ENCODE measurements at regions of chr3 and their contacts with region 1.

Region 1: DNA sequence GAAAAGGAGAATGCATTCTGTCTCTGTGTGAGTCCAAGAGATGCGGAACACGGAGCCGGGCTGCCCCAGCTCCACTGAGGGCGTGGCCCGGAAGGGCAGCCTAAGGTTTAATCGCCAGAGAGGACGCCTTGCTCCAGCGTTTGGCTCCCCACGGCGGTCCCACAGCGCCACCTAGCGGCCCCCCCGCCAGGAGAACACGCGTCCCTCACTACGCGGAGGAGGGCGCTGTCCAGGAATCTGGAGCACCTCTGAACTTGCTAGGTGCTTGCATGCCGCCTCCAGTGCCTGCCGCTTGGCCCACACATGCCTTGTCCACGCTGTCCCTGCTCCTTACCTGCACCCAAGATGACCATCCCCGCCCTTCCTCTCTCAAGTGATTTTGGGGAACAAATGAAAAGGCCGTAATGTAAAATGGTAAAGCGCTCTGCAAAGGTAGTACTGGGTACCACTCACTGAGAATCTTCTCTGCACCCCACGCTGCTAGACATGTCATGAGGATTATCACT is 14.4 kb upstream of the MRPS22 start:
- DNase-seq: no peak
- H3K4me3 ChIP-seq: no peak overlapping the region
- H3K27me3 ChIP-seq: peaks cover 2% of the 10 kb centered on the region; the same call in 1 of the 2 replicates
- CTCF ChIP-seq: peak; percentile 99

Region 2: DNA sequence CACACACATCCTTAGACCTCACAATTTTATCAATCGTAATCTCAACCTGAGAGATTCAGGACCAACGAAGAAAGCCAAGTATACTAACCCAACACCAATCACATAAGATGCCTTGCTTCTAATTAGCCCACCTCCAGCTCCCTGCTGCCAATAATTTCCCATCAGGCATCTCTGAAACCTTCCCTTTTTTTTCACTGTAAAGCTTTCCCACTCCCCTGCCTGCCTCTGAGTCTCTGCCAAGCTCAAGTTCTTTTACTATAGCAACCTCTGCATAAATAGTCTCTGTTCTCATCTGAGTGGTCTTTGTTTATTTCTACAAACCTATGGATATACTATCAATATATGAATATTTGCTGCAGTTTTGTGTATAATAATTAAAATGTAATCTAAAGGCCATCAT is 581.2 kb before region 1 on chr3:
- CTCF ChIA-PET with region 1: no interaction called
- POLR2A ChIA-PET with region 1: no interaction called
- DNase-seq: no peak
- H3K4me3 ChIP-seq: no peak overlapping the region
- H3K27me3 ChIP-seq: no peaks in the 10 kb centered on the region
- CTCF ChIP-seq: no peak

Region 3: DNA sequence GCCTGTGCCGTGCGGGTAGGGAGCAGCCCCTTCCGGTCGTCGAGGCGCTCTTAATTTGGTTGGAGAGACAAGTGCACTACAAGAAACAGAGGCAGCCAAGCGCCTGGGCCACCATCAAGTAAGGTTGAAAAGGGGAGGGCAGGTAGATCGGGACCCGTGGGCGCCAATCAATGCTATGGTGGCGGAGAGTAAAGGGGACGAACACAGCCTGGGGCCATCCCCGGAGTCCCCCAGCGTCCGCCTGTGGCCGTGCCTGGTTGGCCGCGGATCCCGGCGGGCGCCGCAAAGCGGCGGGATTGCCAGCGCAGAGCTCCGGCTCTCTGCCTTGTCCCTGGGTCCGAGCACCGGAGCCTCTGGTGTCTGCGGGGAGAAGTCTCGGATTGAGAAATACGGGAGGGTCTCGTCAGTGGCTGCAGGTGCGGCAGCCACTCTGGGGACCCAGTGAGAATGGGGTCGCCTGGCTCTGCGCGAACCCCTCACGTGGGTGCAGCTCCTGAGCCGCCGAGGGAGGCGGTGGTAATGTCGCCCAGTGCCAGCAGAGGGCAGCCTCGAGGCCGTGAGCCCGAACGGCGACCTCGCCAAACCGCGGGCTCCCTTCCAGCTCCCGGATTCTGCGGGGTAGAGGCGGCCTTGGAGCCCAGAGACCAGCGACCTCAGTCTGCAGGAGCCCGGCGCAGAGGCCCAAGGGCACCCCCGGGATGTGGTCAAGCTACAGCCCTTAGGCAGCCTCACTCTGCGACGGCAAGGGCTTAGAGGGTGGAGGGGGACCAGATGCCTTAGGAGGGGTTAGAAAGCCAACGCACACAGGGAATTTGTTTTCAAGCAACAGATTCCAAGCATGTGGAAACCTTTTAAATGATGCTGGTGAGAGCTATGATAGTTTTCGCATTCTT is 393.3 kb before region 1 on chr3:
- CTCF ChIA-PET with region 1: interaction called, 26 read pairs
- POLR2A ChIA-PET with region 1: no interaction called
- DNase-seq: no peak
- H3K4me3 ChIP-seq: peak overlapping the region; percentile 28
- H3K27me3 ChIP-seq: peaks cover 53% of the 10 kb centered on the region
- CTCF ChIP-seq: peak; percentile 93

Region 4: GRCh38 chr3:139120086-139121056 is 209.0 kb before region 1 on chr3:
- CTCF ChIA-PET with region 1: interaction called, 31 read pairs
- POLR2A ChIA-PET with region 1: no interaction called
- DNase-seq: peak; percentile 64
- H3K4me3 ChIP-seq: no peak overlapping the region
- H3K27me3 ChIP-seq: no peaks in the 10 kb centered on the region
- CTCF ChIP-seq: no peak

Region 5: DNA sequence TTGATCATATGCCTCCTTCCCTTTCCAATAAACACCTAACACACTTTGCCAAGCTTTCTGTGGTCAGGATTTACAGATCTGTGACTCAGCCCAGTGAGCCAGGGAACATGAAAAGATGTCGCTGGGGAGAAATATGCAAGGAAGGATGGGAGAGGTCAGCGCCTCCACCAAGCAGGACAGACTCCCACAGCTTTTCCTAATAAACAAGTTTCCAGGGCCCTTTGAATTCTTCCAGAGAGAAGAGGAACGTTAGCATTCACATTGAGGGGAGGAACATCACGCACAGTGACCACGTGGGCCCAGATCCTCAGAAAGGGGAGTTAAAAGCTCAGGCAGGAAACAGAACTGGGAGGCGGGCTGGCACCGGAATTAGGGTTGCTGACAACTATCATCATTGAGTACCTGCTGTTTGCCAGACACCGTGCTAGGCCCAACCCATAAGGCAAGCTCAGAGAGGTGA is 18.9 kb before region 1 on chr3:
- CTCF ChIA-PET with region 1: interaction called, 59 read pairs
- POLR2A ChIA-PET with region 1: no interaction called
- DNase-seq: peak; percentile 99
- H3K4me3 ChIP-seq: no peak overlapping the region
- H3K27me3 ChIP-seq: no peaks in the 10 kb centered on the region
- CTCF ChIP-seq: no peak

Measured in BJ (cell line).